PC-3 (cell line): ENCODE measurements at regions of chr12 and their contacts with region 1.

Region 1: GRCh38 chr12:52147367-52147972 is 44.3 kb downstream of the KRT80 start:
- DNase-seq: peak; percentile 99
- ATAC-seq: peak; percentile 57
- H3K4me3 ChIP-seq: no peak overlapping the region
- H3K27ac ChIP-seq: peak overlapping the region; percentile 100
- H3K4me1 ChIP-seq: peaks cover 78% of the 10 kb centered on the region
- H3K27me3 ChIP-seq: no peaks in the 10 kb centered on the region
- CTCF ChIP-seq: no peak

Region 2: GRCh38 chr12:52087961-52088820 is 59.3 kb before region 1 on chr12:
- CTCF ChIA-PET with region 1: no interaction called
- POLR2A ChIA-PET with region 1: no interaction called
- intact Hi-C with region 1: no loop called
- DNase-seq: no peak
- ATAC-seq: no peak
- H3K4me3 ChIP-seq: no peak overlapping the region
- H3K27ac ChIP-seq: no peak overlapping the region
- H3K4me1 ChIP-seq: no peaks in the 10 kb centered on the region
- H3K27me3 ChIP-seq: no peaks in the 10 kb centered on the region
- CTCF ChIP-seq: no peak

Region 3: GRCh38 chr12:52203075-52203921 is 55.8 kb after region 1 on chr12:
- CTCF ChIA-PET with region 1: no interaction called
- POLR2A ChIA-PET with region 1: interaction called, 20 read pairs
- intact Hi-C with region 1: no loop called
- DNase-seq: peak; percentile 80
- ATAC-seq: peak; percentile 55
- H3K4me3 ChIP-seq: no peak overlapping the region
- H3K27ac ChIP-seq: peak overlapping the region; percentile 44
- H3K4me1 ChIP-seq: peaks cover 54% of the 10 kb centered on the region
- H3K27me3 ChIP-seq: no peaks in the 10 kb centered on the region
- CTCF ChIP-seq: no peak

Region 4: GRCh38 chr12:52258335-52258901 is 110.9 kb after region 1 on chr12:
- CTCF ChIA-PET with region 1: no interaction called
- POLR2A ChIA-PET with region 1: no interaction called
- intact Hi-C with region 1: no loop called
- DNase-seq: no peak
- ATAC-seq: no peak
- H3K4me3 ChIP-seq: no peak overlapping the region
- H3K27ac ChIP-seq: no peak overlapping the region
- H3K4me1 ChIP-seq: peaks cover 17% of the 10 kb centered on the region
- H3K27me3 ChIP-seq: no peaks in the 10 kb centered on the region
- CTCF ChIP-seq: no peak

Region 5: DNA sequence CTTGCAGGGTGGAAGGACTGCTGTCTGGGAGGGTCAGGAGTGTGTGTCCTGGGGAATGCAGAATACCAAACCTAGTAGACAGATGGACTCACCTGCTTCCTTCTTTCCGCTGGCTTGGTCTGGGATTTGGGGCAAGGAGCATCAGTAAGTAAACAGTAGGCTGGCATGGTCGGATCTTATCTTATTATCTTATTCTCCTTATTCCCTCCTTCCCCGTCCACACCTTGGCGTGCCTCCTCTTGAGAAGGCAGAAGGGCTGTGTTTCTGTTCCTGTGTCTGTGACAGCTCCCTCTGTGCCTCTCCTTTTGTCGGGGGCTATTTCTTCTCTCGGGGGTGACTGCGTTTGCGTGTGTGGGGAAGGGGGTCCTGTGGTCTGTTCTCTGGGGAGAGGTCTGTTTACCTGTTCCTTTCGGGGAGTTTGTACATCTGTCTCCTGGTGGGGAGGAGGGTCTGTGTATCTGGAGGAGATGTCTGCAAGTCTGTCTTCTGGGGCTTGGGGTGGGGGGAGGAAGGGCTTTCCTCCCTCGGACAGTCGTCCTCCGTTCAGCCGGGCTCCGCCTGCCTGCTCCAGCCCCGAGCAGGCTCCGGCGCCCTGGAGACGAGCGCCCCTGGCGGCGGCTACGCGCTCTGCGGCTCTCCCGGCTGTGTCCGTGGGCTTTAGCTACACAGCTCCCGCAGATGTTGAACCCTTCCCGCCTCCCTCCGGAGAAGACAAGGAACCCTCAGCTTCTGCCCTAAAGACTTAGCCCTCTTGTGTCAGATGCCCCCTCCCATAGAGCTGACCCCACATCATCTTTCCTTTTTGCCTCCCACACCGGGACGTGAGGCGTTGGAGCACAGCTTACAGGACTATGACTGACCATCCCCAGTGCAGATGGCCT is 131.3 kb after region 1 on chr12:
- CTCF ChIA-PET with region 1: interaction called, 13 read pairs
- POLR2A ChIA-PET with region 1: interaction called, 39 read pairs
- intact Hi-C with region 1: loop called (anchors 2 kb)
- DNase-seq: peak; percentile 93
- ATAC-seq: peak; percentile 43
- H3K4me3 ChIP-seq: peak overlapping the region; percentile 64
- H3K27ac ChIP-seq: peak overlapping the region; percentile 99
- H3K4me1 ChIP-seq: peaks cover 54% of the 10 kb centered on the region
- H3K27me3 ChIP-seq: no peaks in the 10 kb centered on the region
- CTCF ChIP-seq: peak; percentile 95

Region 6: GRCh38 chr12:52870351-52871290 is 723.2 kb after region 1 on chr12:
- CTCF ChIA-PET with region 1: interaction called, 10 read pairs
- POLR2A ChIA-PET with region 1: interaction called, 14 read pairs
- intact Hi-C with region 1: loop called (anchors 5 kb)
- DNase-seq: peak; percentile 78
- ATAC-seq: peak; percentile 17
- H3K4me3 ChIP-seq: peak overlapping the region; percentile 8; the same call in 1 of the 2 replicates
- H3K27ac ChIP-seq: peak overlapping the region; percentile 97
- H3K4me1 ChIP-seq: peaks cover 51% of the 10 kb centered on the region
- H3K27me3 ChIP-seq: no peaks in the 10 kb centered on the region
- CTCF ChIP-seq: peak; percentile 96

Region 7: DNA sequence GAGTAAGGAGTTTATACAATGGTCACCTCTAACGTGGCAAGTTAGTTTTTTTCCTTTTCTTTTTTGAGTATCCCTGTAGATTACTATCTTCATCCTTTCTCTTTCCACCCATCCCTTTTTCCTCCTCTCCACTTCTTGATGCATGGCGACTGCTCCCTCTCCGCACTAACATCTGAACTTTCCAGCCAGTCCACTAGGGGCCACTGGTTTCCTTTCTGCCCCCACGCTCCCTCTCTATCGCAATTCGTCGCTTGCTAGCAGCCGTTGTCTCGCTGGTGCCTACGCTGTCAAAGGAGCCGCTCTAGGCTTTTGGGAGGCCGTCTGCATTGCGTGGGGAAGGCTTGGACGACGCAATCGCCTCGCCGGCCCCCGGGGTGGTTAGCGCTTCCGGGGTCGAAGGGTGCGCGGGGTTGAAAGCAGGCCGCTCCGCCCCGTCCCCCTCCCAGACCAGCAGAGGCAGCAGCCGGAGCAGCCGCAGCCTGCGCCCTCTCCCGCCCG is 1304.2 kb after region 1 on chr12 and contains the start of gene PCBP2:
- CTCF ChIA-PET with region 1: no interaction called
- POLR2A ChIA-PET with region 1: interaction called, 15 read pairs
- intact Hi-C with region 1: no loop called
- DNase-seq: peak; percentile 99
- ATAC-seq: peak; percentile 98
- H3K4me3 ChIP-seq: peak within 1 kb of the TSS; percentile 95
- H3K27ac ChIP-seq: peak within 1 kb of the TSS; percentile 79
- H3K4me1 ChIP-seq: peaks cover 12% of the 10 kb centered on the region
- H3K27me3 ChIP-seq: no peaks in the 10 kb centered on the region
- CTCF ChIP-seq: peak; percentile 84
- total RNA-seq, gene PCBP2: 204 and 306 TPM in 2 replicates